Naive thymus-derived CD4-positive, alpha-beta T cell (primary cell): ENCODE measurements at regions of chr2 and their contacts with region 1.

Region 1: GRCh38 chr2:60550178-60550983 is 3.1 kb downstream of the BCL11A start:
- DNase-seq: peak in 8 of 9 donors; percentile 23 to 67 (median 50)
- ATAC-seq: peak; percentile 71
- H3K4me3 ChIP-seq: peak overlapping the region; percentile 70
- H3K4me3 Mint-ChIP-seq: peak overlapping the region; percentile 80 to 93 (median 90)
- H3K27ac ChIP-seq: peak overlapping the region; percentile 39
- H3K27ac Mint-ChIP-seq: peak overlapping the region in 6 of 9 donors; percentile 29 to 89 (median 68)
- H3K4me1 ChIP-seq: peaks cover 9 to 17% of the 10 kb centered on the region in 2 donors
- H3K4me1 Mint-ChIP-seq: peaks cover 11 to 57% (median 34%) of the 10 kb centered on the region in 7 donors
- H3K27me3 ChIP-seq: peaks cover 10 to 39% of the 10 kb centered on the region in 2 donors
- H3K27me3 Mint-ChIP-seq: peaks cover 46 to 87% (median 55%) of the 10 kb centered on the region in 5 donors

Region 2: GRCh38 chr2:58571181-58571852 is 1979.1 kb before region 1 on chr2:
- CTCF ChIA-PET with region 1: no interaction called
- POLR2A ChIA-PET with region 1: no interaction called
- intact Hi-C with region 1: loop called in 1 of 2 experiments (anchors 10 kb)
- DNase-seq: no peak
- ATAC-seq: peak; percentile 54
- H3K4me3 ChIP-seq: no peak overlapping the region
- H3K4me3 Mint-ChIP-seq: no peak overlapping the region
- H3K27ac ChIP-seq: no peak overlapping the region
- H3K27ac Mint-ChIP-seq: peak overlapping the region in 1 of 9 donors; percentile 20
- H3K4me1 ChIP-seq: no peaks in the 10 kb centered on the region
- H3K4me1 Mint-ChIP-seq: peaks cover 0 to 25% (median 11%) of the 10 kb centered on the region in 7 donors
- H3K27me3 ChIP-seq: no peaks in the 10 kb centered on the region
- H3K27me3 Mint-ChIP-seq: peaks cover 0 to 7% (median 3%) of the 10 kb centered on the region in 5 donors

Region 3: GRCh38 chr2:59019566-59020159 is 1530.7 kb before region 1 on chr2:
- CTCF ChIA-PET with region 1: no interaction called
- POLR2A ChIA-PET with region 1: no interaction called
- intact Hi-C with region 1: loop called (anchors 5 to 10 kb)
- DNase-seq: no peak
- ATAC-seq: no peak
- H3K4me3 ChIP-seq: no peak overlapping the region
- H3K4me3 Mint-ChIP-seq: no peak overlapping the region
- H3K27ac ChIP-seq: no peak overlapping the region
- H3K27ac Mint-ChIP-seq: no peak overlapping the region
- H3K4me1 ChIP-seq: no peaks in the 10 kb centered on the region
- H3K4me1 Mint-ChIP-seq: peaks cover 0 to 3% (median 0%) of the 10 kb centered on the region in 7 donors
- H3K27me3 ChIP-seq: no peaks in the 10 kb centered on the region
- H3K27me3 Mint-ChIP-seq: peaks cover 0 to 4% (median 0%) of the 10 kb centered on the region in 5 donors

Region 4: GRCh38 chr2:59025157-59025757 is 1525.1 kb before region 1 on chr2:
- CTCF ChIA-PET with region 1: no interaction called
- POLR2A ChIA-PET with region 1: no interaction called
- intact Hi-C with region 1: loop called (anchors 5 to 10 kb)
- DNase-seq: peak in 2 of 9 donors; percentile 6 to 14
- ATAC-seq: peak; percentile 63
- H3K4me3 ChIP-seq: no peak overlapping the region
- H3K4me3 Mint-ChIP-seq: no peak overlapping the region
- H3K27ac ChIP-seq: no peak overlapping the region
- H3K27ac Mint-ChIP-seq: no peak overlapping the region
- H3K4me1 ChIP-seq: no peaks in the 10 kb centered on the region
- H3K4me1 Mint-ChIP-seq: peaks cover 0 to 3% (median 0%) of the 10 kb centered on the region in 7 donors
- H3K27me3 ChIP-seq: no peaks in the 10 kb centered on the region
- H3K27me3 Mint-ChIP-seq: peaks cover 0 to 9% (median 0%) of the 10 kb centered on the region in 5 donors

Region 5: DNA sequence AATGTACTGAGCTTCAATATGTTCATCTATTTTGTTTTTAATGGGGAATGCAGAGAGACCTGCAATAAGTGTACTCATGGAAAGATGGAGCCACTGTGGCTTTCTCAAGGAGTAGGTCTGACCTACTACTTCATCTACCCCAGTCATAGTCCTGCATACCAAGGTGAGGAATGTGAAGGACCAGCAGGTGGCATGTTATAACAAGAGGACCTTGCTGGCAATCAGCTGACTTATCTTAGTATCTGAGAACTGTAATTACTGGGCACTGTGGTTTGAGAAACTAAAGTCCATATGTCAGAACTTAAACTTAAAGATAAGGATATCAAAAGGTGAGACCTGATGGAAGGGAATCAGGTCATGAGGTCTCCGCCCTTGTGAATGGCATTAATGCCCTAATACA is 1101.1 kb before region 1 on chr2:
- CTCF ChIA-PET with region 1: no interaction called
- POLR2A ChIA-PET with region 1: no interaction called
- intact Hi-C with region 1: loop called in 1 of 2 experiments (anchors 10 kb)
- DNase-seq: peak in 1 of 9 donors; percentile 1
- ATAC-seq: no peak
- H3K4me3 ChIP-seq: no peak overlapping the region
- H3K4me3 Mint-ChIP-seq: no peak overlapping the region
- H3K27ac ChIP-seq: no peak overlapping the region
- H3K27ac Mint-ChIP-seq: no peak overlapping the region
- H3K4me1 ChIP-seq: no peaks in the 10 kb centered on the region
- H3K4me1 Mint-ChIP-seq: no peaks in the 10 kb centered on the region
- H3K27me3 ChIP-seq: no peaks in the 10 kb centered on the region
- H3K27me3 Mint-ChIP-seq: peaks cover 0 to 9% (median 0%) of the 10 kb centered on the region in 5 donors